Heart left ventricle (tissue), 16 donors: ENCODE measurements at regions of chr2 and their contacts with region 1.

Region 1: DNA sequence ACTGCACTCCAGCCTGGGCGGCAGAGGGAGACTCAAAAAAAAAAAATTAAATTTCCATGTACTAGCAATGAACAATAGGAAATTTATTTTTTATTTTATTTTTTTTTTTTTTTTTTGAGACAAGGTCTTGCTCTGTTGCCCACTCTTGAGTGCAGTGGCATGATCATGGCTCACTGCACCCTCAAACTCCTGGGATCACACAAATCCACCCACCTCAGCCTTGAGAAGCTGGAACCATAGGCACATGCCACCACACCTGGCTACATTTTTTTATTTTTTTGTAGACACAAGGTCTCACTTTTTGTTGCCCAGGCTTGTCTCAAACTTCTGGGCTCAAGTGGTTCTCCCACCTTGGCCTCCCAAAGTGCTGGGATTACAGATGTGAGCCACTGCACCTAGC is 16.9 kb downstream of the CNOT9 start:
- DNase-seq: no peak
- ATAC-seq: no peak
- H3K4me3 ChIP-seq: no peak overlapping the region
- H3K27ac ChIP-seq: no peak overlapping the region
- H3K4me1 ChIP-seq: no peaks in the 10 kb centered on the region
- H3K27me3 ChIP-seq: no peaks in the 10 kb centered on the region
- CTCF ChIP-seq: no peak
- POLR2A ChIP-seq: no peak

Region 2: GRCh38 chr2:218648088-218648786 is 62.7 kb after region 1 on chr2:
- intact Hi-C with region 1: loop called in 1 of 10 experiments (anchors 10 kb)
- DNase-seq: peak in 1 of 5 donors; percentile 44
- ATAC-seq: peak; percentile 15 to 73 (median 69)
- H3K4me3 ChIP-seq: no peak overlapping the region
- H3K27ac ChIP-seq: no peak overlapping the region
- H3K4me1 ChIP-seq: peaks cover 0 to 7% (median 0%) of the 10 kb centered on the region in 12 donors
- H3K27me3 ChIP-seq: no peaks in the 10 kb centered on the region
- CTCF ChIP-seq: peak; percentile 62 to 82 (median 74)
- POLR2A ChIP-seq: no peak

Region 3: GRCh38 chr2:218659258-218659987 is 73.9 kb after region 1 on chr2 and contains the starts of genes BCS1L and ZNF142:
- intact Hi-C with region 1: no loop called
- DNase-seq: peak; percentile 92 to 95 (median 95)
- ATAC-seq: peak; percentile 89 to 98 (median 96)
- H3K4me3 ChIP-seq: peak within 1 kb of the TSS; percentile 60 to 96 (median 88)
- H3K27ac ChIP-seq: peak within 1 kb of the TSS; percentile 45 to 91 (median 82)
- H3K4me1 ChIP-seq: peaks cover 0 to 45% (median 25%) of the 10 kb centered on the region in 12 donors
- H3K27me3 ChIP-seq: no peaks in the 10 kb centered on the region
- CTCF ChIP-seq: no peak
- POLR2A ChIP-seq: peak in 1 of 2 donors; percentile 81
- total RNA-seq, gene BCS1L: 27.3 to 53.2 (median 43.7) TPM
- total RNA-seq, gene ZNF142: 18.1 to 46.0 (median 21.8) TPM

Region 4: DNA sequence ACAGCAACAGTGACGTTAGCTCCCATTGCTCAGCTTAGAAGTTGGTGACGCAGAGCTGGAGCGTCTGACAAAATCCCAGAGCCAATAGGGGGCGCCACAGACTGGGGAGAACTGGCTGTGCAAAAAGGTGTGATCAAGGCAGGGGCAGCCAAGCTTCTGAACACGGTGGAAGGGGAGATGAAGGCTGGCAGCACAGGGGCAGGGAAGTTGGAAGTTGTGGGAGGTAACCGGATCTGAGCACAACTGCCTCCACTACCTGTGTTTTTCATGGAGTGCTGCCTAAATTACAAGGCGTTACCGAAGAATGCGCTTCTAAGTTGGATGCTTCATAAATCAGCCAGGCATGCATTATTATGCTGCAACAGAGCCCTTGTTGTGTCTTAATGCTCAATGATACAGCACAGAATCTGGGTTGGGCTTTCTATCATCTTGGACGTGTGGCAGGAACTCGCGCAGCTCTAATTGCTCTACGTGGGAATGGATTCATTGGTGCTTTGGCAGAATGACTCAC is 1411.9 kb after region 1 on chr2:
- intact Hi-C with region 1: no loop called
- DNase-seq: peak in 3 of 5 donors; percentile 24 to 26 (median 25)
- ATAC-seq: peak in 1 of 4 donors; percentile 32
- H3K4me3 ChIP-seq: no peak overlapping the region
- H3K27ac ChIP-seq: no peak overlapping the region
- H3K4me1 ChIP-seq: peaks cover 0 to 3% (median 0%) of the 10 kb centered on the region in 12 donors
- H3K27me3 ChIP-seq: no peaks in the 10 kb centered on the region
- CTCF ChIP-seq: peak in 9 of 12 donors; percentile 12 to 47 (median 35)
- POLR2A ChIP-seq: no peak